ENCODE measurements at regions of chr19 and their contacts with region 1.

Region 1: DNA sequence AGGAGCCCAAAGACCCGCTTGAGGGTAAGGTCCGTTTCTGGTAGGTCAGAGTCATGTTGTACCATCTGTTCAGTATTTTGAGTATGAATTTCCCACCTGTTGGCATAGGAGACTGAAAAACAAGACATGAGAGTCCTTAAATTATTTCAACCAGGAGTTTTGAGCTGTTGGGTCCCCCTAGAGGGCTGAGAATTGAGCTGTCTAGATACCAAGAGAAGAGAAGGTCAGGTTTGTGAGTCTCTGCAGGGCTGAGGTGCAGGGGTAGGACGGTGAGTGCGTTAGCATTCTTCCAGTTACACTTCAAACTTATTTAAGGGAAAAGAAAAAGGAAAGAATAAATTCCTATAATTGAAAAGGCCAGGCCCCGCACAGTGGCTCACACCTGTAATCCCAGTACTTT is 5.0 kb downstream of the CBLC start:
- DNase-seq: no peak
- H3K4me3 Mint-ChIP-seq: no peak overlapping the region
- H3K27ac Mint-ChIP-seq: no peak overlapping the region
- H3K4me1 Mint-ChIP-seq: peaks cover 4% of the 10 kb centered on the region
- H3K27me3 Mint-ChIP-seq: peaks cover 19% of the 10 kb centered on the region

Region 2: GRCh38 chr19:44723952-44724319 is 58.8 kb before region 1 on chr19:
- CTCF ChIA-PET with region 1: interaction called, 44 read pairs
- DNase-seq: peak; percentile 86
- H3K4me3 Mint-ChIP-seq: no peak overlapping the region
- H3K27ac Mint-ChIP-seq: peak overlapping the region; percentile 21
- H3K4me1 Mint-ChIP-seq: peaks cover 56% of the 10 kb centered on the region
- H3K27me3 Mint-ChIP-seq: peaks cover 35% of the 10 kb centered on the region

Region 3: GRCh38 chr19:44762038-44762437 is 20.7 kb before region 1 on chr19:
- CTCF ChIA-PET with region 1: no interaction called
- DNase-seq: no peak
- H3K4me3 Mint-ChIP-seq: no peak overlapping the region
- H3K27ac Mint-ChIP-seq: peak overlapping the region; percentile 37
- H3K4me1 Mint-ChIP-seq: peaks cover 51% of the 10 kb centered on the region
- H3K27me3 Mint-ChIP-seq: no peaks in the 10 kb centered on the region

Region 4: DNA sequence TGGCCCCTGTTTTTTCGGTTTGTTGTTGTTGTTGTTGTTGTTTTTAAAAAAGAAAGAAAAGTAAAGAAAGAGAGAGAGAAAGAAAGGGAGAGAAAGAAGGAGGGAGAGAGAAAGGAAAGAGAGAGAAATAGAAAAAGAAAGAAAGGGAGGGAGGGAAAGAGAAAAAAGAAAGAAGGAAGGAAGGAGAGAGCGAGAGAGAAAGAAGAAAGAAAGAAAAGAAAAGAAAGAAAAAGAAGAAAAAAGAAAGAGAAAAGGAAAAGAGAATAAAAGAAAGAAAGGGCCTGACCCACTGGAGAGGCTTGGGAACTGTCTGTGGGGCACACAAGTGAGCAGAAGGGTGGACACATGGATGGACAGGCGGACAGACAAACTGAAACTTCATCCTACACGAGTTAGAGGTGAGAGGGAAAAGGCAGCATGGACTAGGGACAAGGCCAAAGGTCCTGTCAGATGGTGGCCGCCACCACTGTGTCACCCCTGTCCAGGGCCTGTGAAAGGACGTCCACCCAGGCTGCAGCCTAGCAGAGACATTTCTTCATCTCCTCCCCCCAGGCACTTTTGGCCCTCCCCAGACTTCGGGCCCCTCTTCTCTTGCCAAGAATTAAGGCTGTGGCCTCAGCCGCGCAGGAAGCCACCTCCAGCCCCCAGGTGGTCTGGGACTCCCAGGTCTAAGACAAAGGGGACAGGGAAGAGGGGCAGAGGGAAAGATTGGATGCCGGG is 17.1 kb after region 1 on chr19:
- CTCF ChIA-PET with region 1: interaction called, 17 read pairs
- DNase-seq: no peak
- H3K4me3 Mint-ChIP-seq: no peak overlapping the region
- H3K27ac Mint-ChIP-seq: no peak overlapping the region
- H3K4me1 Mint-ChIP-seq: peaks cover 34% of the 10 kb centered on the region
- H3K27me3 Mint-ChIP-seq: peaks cover 20% of the 10 kb centered on the region

Region 5: DNA sequence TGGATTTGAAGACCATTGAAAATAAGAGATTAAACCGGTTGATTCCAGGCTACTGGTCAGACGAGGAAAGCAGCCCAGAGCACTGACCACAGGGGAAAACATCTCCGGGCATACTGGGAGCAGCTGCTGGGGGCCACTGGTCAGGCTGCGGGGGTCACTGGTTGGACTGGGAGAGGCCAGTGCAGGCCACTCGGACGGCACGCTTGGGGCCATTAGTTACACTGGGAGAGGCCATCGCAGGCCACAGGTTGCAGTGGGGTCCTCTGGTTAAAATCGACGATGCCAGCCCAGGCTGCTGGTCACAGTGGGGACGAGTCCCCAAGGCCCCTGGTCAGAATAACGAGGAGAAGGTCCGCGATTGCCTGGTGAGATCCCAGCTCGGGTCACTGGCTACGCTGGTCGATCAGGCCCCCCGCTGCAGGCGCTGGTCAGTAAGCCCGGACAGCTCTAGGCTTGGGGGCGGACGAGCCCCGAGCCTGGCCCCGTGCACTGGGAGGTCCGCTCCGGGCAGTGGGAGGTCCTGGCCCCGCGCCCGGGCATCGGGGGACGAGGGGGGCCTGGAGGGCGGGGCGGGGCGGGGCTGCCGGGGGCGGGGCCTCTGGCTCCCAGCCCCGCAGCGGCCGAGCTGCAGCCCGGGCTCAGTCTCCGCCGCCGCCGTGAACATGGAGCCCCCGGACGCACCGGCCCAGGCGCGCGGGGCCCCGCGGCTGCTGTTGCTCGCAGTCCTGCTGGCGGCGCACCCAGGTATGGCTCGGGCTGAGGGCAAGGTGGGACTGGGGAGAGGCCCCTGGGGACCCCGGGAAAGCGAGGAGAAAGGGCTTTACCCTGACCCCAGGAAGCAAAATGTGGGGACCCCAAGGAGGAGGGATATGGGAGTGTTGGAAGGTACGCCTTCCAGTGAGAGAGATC is 26.0 kb after region 1 on chr19 and contains the start of gene BCAM:
- CTCF ChIA-PET with region 1: interaction called, 10 read pairs
- DNase-seq: no peak
- H3K4me3 Mint-ChIP-seq: no peak within 1 kb of the TSS
- H3K27ac Mint-ChIP-seq: no peak within 1 kb of the TSS
- H3K4me1 Mint-ChIP-seq: no peaks in the 10 kb centered on the region
- H3K27me3 Mint-ChIP-seq: peaks cover 46% of the 10 kb centered on the region

Region 6: DNA sequence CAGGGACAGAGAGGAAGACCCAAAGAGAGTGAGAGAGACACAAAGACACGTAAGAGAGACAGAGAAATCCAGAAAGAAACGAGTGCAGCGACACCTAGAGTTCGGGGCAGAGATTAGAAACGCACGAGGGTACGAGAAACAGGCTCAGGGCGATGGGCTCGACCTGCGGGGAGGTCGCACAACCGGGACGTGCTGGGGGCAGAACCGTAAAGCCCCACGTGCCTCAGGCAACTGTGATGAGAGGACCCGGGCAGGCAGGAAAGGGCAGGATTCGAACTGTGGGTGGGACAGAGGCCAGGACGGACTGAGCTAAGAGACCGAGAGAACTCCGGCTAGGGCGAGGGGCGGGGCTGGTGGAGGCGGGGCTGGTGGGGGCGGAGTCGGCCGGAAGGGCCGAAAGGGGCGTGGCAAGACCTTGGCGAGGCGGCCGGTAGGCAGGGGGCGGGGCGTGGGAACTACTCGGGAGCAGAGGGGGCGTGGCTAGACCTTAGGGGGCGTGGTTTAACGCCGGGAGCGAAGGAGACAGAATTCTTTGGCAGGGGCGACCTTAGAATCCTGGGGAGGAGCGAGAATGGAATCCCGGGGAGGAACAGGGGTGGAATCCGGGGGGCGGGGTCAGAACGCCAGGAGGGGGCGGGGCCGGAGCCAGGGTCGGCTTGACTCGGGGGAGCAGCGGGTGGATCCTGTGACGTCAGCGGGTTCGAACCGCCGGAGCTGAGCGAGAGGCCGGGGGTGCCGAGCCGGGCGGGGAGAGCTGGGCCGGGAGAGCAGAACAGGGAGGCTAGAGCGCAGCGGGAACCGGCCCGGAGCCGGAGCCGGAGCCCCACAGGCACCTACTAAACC is 63.1 kb after region 1 on chr19 and contains the start of gene NECTIN2:
- CTCF ChIA-PET with region 1: interaction called, 10 read pairs
- DNase-seq: peak; percentile 84
- H3K4me3 Mint-ChIP-seq: peak within 1 kb of the TSS; percentile 72
- H3K27ac Mint-ChIP-seq: peak within 1 kb of the TSS; percentile 26
- H3K4me1 Mint-ChIP-seq: peaks cover 25% of the 10 kb centered on the region
- H3K27me3 Mint-ChIP-seq: peaks cover 62% of the 10 kb centered on the region

Measured in activated naive CD4-positive, alpha-beta T cell treated with anti-CD3 and anti-CD28 coated beads, Interleukin-2, amount 10 ng/mL, durations not matched to agents 7 days and 5 days (primary cell).